Common myeloid progenitor, CD34-positive (primary cell): ENCODE measurements at regions of chr2 and their contacts with region 1.

Region 1: GRCh38 chr2:232142049-232142448 is 180.5 kb downstream of the DIS3L2 start:
- DNase-seq: peak; percentile 46 to 59 (median 58)
- H3K4me3 ChIP-seq: no peak overlapping the region
- H3K27ac ChIP-seq: no peak overlapping the region
- H3K4me1 ChIP-seq: peaks cover 9 to 28% (median 16%) of the 10 kb centered on the region in 4 experiments
- H3K27me3 ChIP-seq: peaks cover 0 to 2% (median 0%) of the 10 kb centered on the region in 5 experiments

Region 2: GRCh38 chr2:231900486-231900942 is 241.5 kb before region 1 on chr2:
- CTCF ChIA-PET with region 1: interaction called, 12 read pairs
- POLR2A ChIA-PET with region 1: no interaction called
- DNase-seq: peak; percentile 42 to 65 (median 61)
- H3K4me3 ChIP-seq: no peak overlapping the region
- H3K27ac ChIP-seq: no peak overlapping the region
- H3K4me1 ChIP-seq: peaks cover 0 to 2% (median 0%) of the 10 kb centered on the region in 4 experiments
- H3K27me3 ChIP-seq: peaks cover 0 to 2% (median 0%) of the 10 kb centered on the region in 5 experiments

Region 3: DNA sequence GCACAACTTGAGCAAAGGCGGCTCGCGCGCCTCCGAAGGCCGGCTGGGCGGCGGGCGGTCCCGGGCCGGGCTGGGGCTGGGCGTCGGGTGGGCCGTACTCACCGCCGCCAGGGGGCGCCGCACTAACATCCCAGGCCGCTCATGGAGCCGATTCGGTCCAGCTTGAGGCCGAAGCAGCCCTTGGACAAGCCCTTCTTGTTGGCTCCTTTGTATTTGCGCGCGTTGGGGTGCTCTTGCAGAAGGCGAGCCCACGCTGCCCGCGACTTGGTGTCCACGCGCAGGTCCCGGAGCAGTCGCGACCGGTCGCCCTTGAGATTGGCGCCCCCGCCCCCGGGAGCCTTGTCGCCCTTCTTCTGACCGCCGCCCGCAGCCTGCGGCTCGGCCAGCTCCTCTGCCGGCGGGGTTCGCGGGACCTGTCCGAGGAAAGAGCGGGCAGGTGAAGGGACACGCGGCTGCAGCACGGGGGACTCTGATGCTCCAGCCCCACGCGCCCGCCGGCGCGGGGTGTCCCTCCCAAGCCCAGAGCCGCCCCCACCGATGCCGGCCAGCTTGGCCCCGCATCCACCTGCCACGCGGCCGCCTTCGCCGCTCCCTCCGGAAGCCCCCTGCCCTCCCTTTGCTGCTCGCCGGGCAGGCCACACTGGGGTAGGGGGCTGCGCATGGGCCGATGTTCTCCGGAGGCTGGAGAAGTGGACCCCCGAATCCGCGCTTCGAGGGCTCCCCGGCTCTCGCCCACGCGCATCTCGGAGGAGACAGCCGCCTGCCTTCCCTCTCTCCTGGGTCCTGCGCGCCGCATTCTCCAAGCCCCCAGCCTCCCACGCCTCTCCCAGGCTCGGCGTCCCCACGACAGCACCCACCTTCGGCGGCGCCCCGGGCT is 216.5 kb before region 1 on chr2:
- CTCF ChIA-PET with region 1: interaction called, 75 read pairs
- POLR2A ChIA-PET with region 1: no interaction called
- DNase-seq: peak; percentile 64 to 76 (median 72)
- H3K4me3 ChIP-seq: peak overlapping the region in 6 of 7 experiments; percentile 48 to 77 (median 64)
- H3K27ac ChIP-seq: no peak overlapping the region
- H3K4me1 ChIP-seq: peaks cover 0 to 32% (median 30%) of the 10 kb centered on the region in 4 experiments
- H3K27me3 ChIP-seq: peaks cover 0 to 63% (median 25%) of the 10 kb centered on the region in 5 experiments

Region 4: GRCh38 chr2:232126301-232127099 is 15.5 kb before region 1 on chr2:
- CTCF ChIA-PET with region 1: interaction called, 21 read pairs
- POLR2A ChIA-PET with region 1: no interaction called
- DNase-seq: peak in 1 of 3 donors; percentile 30
- H3K4me3 ChIP-seq: no peak overlapping the region
- H3K27ac ChIP-seq: no peak overlapping the region
- H3K4me1 ChIP-seq: peaks cover 0 to 8% (median 4%) of the 10 kb centered on the region in 4 experiments
- H3K27me3 ChIP-seq: no peaks in the 10 kb centered on the region

Region 5: DNA sequence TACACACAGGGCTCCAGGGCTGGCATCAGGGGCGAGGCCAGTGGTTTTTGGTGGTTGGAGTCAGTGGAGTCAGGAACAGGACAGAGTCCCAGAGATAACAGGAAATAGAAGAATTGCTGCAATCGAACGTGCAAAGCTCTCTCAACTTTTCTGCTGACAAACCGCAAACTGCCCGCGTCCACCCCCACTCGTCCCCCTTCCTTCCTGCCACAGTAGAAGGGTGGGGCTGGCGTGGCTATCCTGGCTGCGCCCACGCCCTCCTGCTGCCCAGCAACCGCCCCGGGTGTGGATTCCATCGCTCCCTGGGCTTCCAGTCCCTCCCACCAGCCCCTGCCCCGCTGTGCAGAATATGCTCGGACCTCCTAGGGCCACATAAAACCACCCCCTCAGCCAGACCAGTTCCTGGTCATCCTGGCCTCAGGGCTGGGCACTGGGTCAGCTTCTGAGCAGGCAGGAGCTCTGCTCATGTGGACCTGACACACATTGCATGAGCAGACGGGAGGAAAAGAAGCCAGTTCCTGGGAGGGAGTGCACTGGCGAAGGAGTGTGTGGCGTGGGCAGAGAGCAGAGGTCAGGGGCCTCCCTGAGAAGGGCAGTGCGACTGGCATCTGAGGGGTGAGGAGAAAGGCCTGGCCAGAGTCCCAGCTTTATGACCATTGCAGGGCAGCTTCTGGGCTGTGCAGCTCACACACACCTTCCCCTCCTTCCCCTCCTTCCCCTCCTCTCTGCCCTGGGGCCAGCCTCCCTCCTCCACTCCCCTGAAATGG is 1024.0 kb after region 1 on chr2:
- CTCF ChIA-PET with region 1: no interaction called
- POLR2A ChIA-PET with region 1: no interaction called
- DNase-seq: peak; percentile 35 to 75 (median 69)
- H3K4me3 ChIP-seq: peak overlapping the region in 1 of 7 experiments; percentile 12
- H3K27ac ChIP-seq: peak overlapping the region in 1 of 2 experiments; percentile 49
- H3K4me1 ChIP-seq: peaks cover 0 to 18% (median 8%) of the 10 kb centered on the region in 4 experiments
- H3K27me3 ChIP-seq: no peaks in the 10 kb centered on the region